ENCODE measurements at regions of chr1 and their contacts with region 1.

Region 1: GRCh38 chr1:87953732-87954344 is 625.2 kb downstream of the LMO4 start:
- DNase-seq: peak in 7 of 10 donors; percentile 35 to 90 (median 58)

Region 2: DNA sequence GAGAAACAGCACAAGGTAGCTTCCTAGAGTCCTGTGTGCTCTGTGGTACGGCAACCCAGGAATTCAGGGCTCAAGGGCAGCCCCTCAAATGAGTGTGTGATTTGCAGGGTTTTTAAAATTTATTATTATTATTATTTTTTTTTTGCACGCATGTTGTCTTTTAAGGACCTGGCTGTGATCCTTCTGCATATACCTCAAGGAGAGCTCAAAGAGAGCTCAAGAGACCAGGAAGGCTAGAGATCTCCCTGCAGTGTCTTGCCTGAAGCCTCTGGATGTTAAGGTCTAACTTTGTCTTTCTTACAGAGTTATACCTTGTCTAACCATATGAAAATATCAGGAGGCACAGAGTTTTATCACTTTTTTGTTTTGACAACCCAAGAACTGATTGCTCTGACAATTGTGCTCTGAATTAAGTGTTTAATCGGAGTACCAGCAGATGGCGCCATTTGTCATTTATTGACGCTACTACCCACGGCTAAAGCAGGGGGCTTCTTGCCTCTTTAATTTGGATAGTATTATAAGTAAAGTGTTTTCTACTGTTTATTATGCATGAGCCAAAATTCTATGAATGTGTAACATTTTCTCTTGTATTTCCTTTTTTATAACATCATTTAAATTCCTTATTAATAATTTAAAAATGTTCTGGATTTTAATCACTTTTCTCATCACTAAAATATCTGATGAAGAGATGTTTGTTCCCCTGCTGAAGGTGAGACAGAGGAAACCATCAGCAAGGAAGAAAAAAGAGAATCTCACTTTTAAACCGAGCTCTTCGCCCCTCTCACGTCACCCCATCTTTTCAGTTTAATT is 660.9 kb before region 1 on chr1:
- intact Hi-C with region 1: loop called (anchors 1 kb)
- DNase-seq: peak in 4 of 10 donors; percentile 56 to 70 (median 60)

Region 3: DNA sequence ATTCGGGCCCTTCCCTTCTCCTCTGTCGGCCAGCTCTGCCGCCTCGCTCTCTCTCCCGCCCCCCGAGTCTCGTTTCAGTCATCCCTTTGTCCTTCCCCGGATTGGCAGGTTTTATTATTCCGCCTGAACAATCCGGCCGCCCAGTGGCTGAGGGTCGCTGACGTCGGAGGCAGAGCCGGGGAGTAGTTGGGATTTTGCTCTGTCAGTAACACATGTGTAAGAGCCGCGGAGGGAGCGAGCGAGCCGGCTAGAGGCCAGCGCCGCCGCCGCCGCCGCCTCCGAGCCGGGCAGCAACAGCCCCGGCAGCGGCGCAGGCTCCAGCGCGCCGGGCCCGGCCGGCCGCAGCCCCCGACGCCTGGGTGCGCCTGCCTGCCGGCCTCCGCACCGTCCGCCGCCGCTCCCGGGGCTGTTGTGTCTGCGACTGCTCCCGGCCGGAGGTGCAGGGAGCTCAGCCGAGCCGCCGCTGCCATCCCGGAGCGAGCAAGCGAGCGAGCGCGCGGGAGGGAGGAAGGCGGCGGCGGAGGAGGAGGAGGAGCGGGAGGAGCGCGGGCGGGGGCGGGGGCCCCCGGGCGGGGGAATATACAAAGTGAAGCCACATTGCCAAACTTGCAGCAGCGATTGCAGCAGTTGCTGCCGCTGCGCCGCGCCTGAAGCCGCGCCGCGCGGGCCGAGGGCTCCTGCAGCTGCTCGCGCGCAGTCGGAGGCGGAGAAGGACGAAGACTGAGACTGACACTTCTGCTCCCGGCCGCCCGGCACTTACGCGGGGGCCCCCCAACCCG is 625.4 kb before region 1 on chr1 and contains the start of gene LMO4:
- intact Hi-C with region 1: loop called (anchors 2 kb)
- DNase-seq: peak; percentile 94 to 99 (median 96)

Region 4: DNA sequence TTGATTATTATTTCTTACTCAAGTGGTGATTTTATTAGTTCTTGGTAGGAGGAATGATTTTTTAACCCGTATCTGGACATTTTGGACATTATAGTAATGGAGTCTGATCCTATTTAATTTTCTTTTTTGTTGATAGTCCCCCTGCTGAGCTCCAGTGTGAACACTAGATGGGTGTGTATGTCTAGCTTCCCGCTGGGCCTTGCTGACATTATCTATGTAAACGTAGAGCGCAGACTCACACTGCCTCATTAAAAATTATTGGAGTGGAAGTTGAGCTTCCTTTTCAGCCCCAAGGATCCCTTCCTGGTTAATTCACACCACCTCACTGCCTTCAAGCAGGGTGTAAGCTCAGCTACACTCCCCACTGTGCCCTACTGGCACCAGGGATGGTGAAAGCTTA is 262.6 kb after region 1 on chr1:
- intact Hi-C with region 1: no loop called
- DNase-seq: no peak

Measured in posterior cingulate gyrus (tissue), 11 donors.